Caco-2 (cell line): ENCODE measurements at regions of chr5 and their contacts with region 1.

Region 1: DNA sequence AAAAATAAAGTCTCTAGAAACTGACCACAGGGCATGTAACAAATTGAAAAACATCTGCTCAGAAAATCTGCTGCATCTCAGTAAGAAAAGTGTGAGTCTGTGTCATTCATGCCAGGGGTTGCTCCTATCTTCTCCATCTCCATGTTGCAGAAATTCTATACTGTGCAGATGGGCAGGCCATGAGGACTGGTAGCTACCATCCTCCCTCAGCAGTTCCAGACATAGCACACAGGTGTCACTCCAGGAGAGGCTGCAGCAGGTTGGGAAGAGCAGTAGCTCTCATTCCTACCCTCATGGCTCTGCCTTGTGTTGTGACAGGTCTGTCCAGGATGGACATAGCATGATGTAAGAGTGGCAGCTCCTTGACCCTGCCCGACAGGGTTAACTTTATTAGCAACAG is 173.4 kb downstream of the NDUFS4 start:
- DNase-seq: peak in 1 of 2 experiments; percentile 35
- H3K4me3 ChIP-seq: no peak overlapping the region
- H3K4me3 Mint-ChIP-seq: no peak overlapping the region
- H3K27ac Mint-ChIP-seq: no peak overlapping the region
- H3K4me1 ChIP-seq: no peaks in the 10 kb centered on the region
- H3K4me1 Mint-ChIP-seq: no peaks in the 10 kb centered on the region
- H3K27me3 ChIP-seq: no peaks in the 10 kb centered on the region
- H3K27me3 Mint-ChIP-seq: no peaks in the 10 kb centered on the region
- CTCF ChIP-seq: peak; percentile 41 to 62

Region 2: GRCh38 chr5:53874409-53874808 is 140.6 kb after region 1 on chr5:
- CTCF ChIA-PET with region 1: no interaction called
- POLR2A ChIA-PET with region 1: no interaction called
- intact Hi-C with region 1: loop called (anchors 2 kb)
- DNase-seq: peak; percentile 34 to 46
- H3K4me3 ChIP-seq: no peak overlapping the region
- H3K4me3 Mint-ChIP-seq: no peak overlapping the region
- H3K27ac Mint-ChIP-seq: no peak overlapping the region
- H3K4me1 ChIP-seq: no peaks in the 10 kb centered on the region
- H3K4me1 Mint-ChIP-seq: no peaks in the 10 kb centered on the region
- H3K27me3 ChIP-seq: no peaks in the 10 kb centered on the region
- H3K27me3 Mint-ChIP-seq: no peaks in the 10 kb centered on the region
- CTCF ChIP-seq: peak; percentile 14

Region 3: DNA sequence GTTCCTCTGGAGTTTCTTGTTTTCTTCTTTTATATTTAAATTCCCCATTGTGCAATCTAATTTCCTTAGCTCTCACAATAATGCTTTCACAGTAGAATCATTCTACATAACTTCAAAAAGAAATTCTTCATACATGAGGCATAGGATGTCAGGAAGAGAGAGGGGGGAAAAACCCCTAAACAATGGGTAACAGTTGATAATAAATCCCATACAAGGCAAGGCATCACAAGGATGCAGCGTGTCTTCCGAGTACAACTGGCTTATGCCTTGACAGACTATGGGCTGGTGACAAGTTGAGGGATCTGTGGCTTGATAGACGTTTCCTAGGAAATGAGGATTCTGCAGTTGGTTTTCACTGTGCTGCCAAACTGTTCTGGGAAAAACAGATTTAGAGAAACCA is 329.1 kb after region 1 on chr5:
- CTCF ChIA-PET with region 1: no interaction called
- POLR2A ChIA-PET with region 1: no interaction called
- intact Hi-C with region 1: loop called (anchors 10 kb)
- DNase-seq: no peak
- H3K4me3 ChIP-seq: no peak overlapping the region
- H3K4me3 Mint-ChIP-seq: no peak overlapping the region
- H3K27ac Mint-ChIP-seq: no peak overlapping the region
- H3K4me1 ChIP-seq: no peaks in the 10 kb centered on the region
- H3K4me1 Mint-ChIP-seq: no peaks in the 10 kb centered on the region
- H3K27me3 ChIP-seq: no peaks in the 10 kb centered on the region
- H3K27me3 Mint-ChIP-seq: no peaks in the 10 kb centered on the region
- CTCF ChIP-seq: no peak